SK-N-SH (cell line): ENCODE measurements at regions of chr9 and their contacts with region 1.

Region 1: GRCh38 chr9:34759432-34760134 is 49.6 kb upstream of the CCL21 start:
- DNase-seq: no peak
- H3K4me3 ChIP-seq: no peak overlapping the region
- H3K27ac ChIP-seq: no peak overlapping the region
- H3K4me1 ChIP-seq: no peaks in the 10 kb centered on the region
- H3K27me3 ChIP-seq: peaks cover 10% of the 10 kb centered on the region; the same call in 1 of the 2 replicates
- CTCF ChIP-seq: no peak
- EP300 ChIP-seq: no peak
- RAD21 ChIP-seq: no peak

Region 2: GRCh38 chr9:34744295-34745221 is 15.0 kb before region 1 on chr9:
- CTCF ChIA-PET with region 1: interaction called, 18 read pairs
- POLR2A ChIA-PET with region 1: no interaction called
- DNase-seq: no peak
- H3K4me3 ChIP-seq: no peak overlapping the region
- H3K27ac ChIP-seq: no peak overlapping the region
- H3K4me1 ChIP-seq: no peaks in the 10 kb centered on the region
- H3K27me3 ChIP-seq: no peaks in the 10 kb centered on the region
- CTCF ChIP-seq: no peak
- EP300 ChIP-seq: no peak
- RAD21 ChIP-seq: no peak

Region 3: DNA sequence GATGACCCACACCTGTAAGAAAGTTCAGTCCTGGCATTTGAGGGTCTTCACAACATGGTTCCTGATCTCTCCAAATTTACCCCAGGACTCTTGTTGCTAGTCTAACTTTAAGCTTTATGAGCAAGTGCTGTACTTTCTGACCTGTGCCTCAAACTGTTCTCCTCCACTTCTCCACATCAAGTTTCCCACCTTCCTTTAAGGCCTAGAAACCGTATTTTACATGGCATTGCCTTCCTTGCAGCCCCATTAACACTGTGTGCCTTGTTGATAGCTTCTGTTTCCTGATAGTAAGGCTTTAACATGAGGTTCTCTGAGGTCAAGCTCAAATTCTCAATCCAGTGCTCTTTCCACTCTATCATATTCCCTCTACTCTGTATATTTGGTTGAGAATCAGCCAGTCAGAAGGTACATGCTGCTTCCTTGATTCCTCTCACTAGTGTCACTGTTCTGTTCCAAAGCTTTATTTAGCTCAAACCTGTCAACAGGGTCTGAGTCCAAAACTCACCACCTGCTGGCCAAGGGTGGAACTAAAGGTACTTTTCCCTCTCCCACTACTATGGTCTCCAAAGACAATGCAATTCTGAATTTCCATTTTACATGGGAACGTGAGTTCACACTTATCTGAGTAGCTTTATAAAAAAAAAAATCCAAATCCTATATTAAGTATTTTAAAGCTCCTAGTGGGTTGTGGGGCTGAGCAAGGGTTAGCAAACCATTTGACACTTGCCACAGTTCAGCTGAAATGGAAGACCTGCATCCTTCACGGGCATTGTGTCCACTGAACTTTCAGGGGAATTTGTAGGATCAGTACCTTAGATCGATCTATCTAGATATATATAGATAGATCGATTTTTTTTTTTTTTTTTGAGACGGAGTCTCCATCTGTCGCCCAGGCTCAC is 291.7 kb after region 1 on chr9:
- CTCF ChIA-PET with region 1: interaction called, 15 read pairs
- POLR2A ChIA-PET with region 1: no interaction called
- DNase-seq: peak; percentile 67
- H3K4me3 ChIP-seq: no peak overlapping the region
- H3K27ac ChIP-seq: no peak overlapping the region
- H3K4me1 ChIP-seq: no peaks in the 10 kb centered on the region
- H3K27me3 ChIP-seq: no peaks in the 10 kb centered on the region
- CTCF ChIP-seq: peak; percentile 70
- EP300 ChIP-seq: no peak
- RAD21 ChIP-seq: peak; percentile 57